OCI-LY7 (cell line): ENCODE measurements at regions of chr3 and their contacts with region 1.

Region 1: DNA sequence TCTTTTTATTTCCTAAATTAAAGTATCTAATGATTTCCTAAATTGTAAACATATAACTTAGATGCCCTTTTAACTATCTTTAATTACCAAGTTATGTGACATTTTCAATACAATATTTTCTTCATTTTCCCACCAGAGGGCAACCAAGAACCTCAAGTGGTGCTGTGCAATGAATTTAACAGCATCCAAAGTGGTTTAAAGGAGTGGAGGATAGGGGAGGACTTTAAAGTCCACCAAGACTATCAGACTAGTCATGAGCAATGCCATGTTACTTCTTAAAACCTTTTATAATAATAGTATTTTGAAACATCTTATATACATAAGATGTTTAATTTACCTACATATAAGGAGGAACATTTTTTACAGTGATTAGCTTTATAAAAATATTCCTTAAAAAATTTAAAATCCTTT is 74.4 kb downstream of the DLG1 start:
- DNase-seq: peak; percentile 67
- H3K4me3 ChIP-seq: no peak overlapping the region
- H3K27ac ChIP-seq: no peak overlapping the region
- H3K4me1 ChIP-seq: peaks cover 6% of the 10 kb centered on the region
- CTCF ChIP-seq: peak; percentile 89

Region 2: GRCh38 chr3:197445896-197446711 is 222.1 kb after region 1 on chr3:
- CTCF ChIA-PET with region 1: no interaction called
- POLR2A ChIA-PET with region 1: no interaction called
- intact Hi-C with region 1: loop called (anchors 2 kb)
- DNase-seq: no peak
- H3K4me3 ChIP-seq: no peak overlapping the region
- H3K27ac ChIP-seq: no peak overlapping the region
- H3K4me1 ChIP-seq: no peaks in the 10 kb centered on the region
- CTCF ChIP-seq: no peak

Region 3: DNA sequence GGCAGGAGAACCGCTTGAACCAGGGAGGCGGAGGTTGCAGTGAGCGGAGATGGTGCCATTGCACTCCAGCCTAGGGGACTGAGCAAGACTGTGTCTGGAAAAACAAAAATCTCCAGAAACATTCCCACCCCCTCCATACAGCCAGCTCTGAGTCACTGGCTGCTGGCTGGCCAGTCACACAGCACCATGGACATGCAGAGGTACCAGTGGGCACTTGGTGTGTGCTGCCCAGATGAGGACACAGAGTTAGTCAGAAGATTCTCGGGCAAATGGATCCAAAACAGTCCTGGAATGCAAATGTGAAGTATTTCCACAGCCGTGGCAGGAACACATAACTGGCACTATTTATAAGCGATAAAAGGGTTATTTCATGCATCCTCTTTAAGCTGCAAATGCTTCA is 287.1 kb after region 1 on chr3:
- CTCF ChIA-PET with region 1: no interaction called
- POLR2A ChIA-PET with region 1: no interaction called
- intact Hi-C with region 1: loop called (anchors 2 kb)
- DNase-seq: no peak
- H3K4me3 ChIP-seq: no peak overlapping the region
- H3K27ac ChIP-seq: no peak overlapping the region
- H3K4me1 ChIP-seq: peaks cover 4% of the 10 kb centered on the region
- CTCF ChIP-seq: no peak